Caco-2 (cell line): ENCODE measurements at regions of chr5 and their contacts with region 1.

Region 1: GRCh38 chr5:32174011-32174870 is at the start of gene GOLPH3:
- DNase-seq: peak; percentile 93 to 96
- H3K4me3 ChIP-seq: peak within 1 kb of the TSS; percentile 98
- H3K4me3 Mint-ChIP-seq: peak within 1 kb of the TSS; percentile 90
- H3K27ac Mint-ChIP-seq: peak within 1 kb of the TSS; percentile 98
- H3K4me1 ChIP-seq: 0 out of 2 replicates have a peak, but pooled peaks cover 4% of the 10 kb centered on the region
- H3K4me1 Mint-ChIP-seq: peaks cover 7% of the 10 kb centered on the region
- H3K27me3 ChIP-seq: no peaks in the 10 kb centered on the region
- H3K27me3 Mint-ChIP-seq: no peaks in the 10 kb centered on the region
- CTCF ChIP-seq: no peak
- total RNA-seq, gene GOLPH3: 107 and 122 TPM in 2 replicates

Region 2: DNA sequence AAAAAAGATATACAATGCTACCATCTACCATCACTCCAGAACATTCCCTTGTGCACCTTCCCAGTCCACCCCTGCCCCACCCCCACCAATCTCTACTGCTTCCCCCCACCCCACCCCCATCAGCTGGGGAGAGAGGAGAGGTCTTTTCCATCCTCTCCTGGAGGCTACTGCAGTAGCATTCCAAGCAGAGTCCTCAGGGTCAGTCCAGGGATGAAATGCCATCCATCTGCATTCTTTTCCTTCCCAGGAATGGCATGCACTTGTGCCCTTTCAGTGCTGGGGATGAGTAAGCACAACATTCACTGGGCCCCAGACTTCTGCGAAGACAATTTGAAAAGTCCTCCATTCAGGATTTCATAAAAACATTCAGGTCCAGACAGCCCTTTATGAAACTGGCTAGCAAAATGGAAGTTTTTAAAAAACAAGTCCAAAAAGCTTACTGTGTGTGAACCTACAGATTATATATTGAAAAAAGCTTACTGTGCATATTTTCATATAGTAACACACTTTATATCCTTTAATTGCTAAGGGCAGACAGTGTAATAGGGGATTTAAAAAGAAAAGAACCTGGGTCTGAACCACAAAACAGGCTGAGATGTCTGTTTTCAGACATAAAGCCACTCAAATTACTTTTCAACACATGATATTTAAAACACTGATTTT is 49.8 kb after region 1 on chr5:
- CTCF ChIA-PET with region 1: no interaction called
- POLR2A ChIA-PET with region 1: interaction called, 10 read pairs
- intact Hi-C with region 1: loop called (anchors 1 kb)
- DNase-seq: peak; percentile 82 to 90
- H3K4me3 ChIP-seq: no peak overlapping the region
- H3K4me3 Mint-ChIP-seq: peak overlapping the region; percentile 42
- H3K27ac Mint-ChIP-seq: peak overlapping the region; percentile 83
- H3K4me1 ChIP-seq: peaks cover 30% of the 10 kb centered on the region
- H3K4me1 Mint-ChIP-seq: peaks cover 22% of the 10 kb centered on the region
- H3K27me3 ChIP-seq: no peaks in the 10 kb centered on the region
- H3K27me3 Mint-ChIP-seq: no peaks in the 10 kb centered on the region
- CTCF ChIP-seq: no peak

Region 3: GRCh38 chr5:32329308-32329834 is 155.1 kb after region 1 on chr5:
- CTCF ChIA-PET with region 1: interaction called, 3 read pairs
- POLR2A ChIA-PET with region 1: no interaction called
- intact Hi-C with region 1: loop called (anchors 5 kb)
- DNase-seq: peak; percentile 61 to 68
- H3K4me3 ChIP-seq: no peak overlapping the region
- H3K4me3 Mint-ChIP-seq: no peak overlapping the region
- H3K27ac Mint-ChIP-seq: no peak overlapping the region
- H3K4me1 ChIP-seq: peaks cover 10% of the 10 kb centered on the region; the same call in 1 of the 2 replicates
- H3K4me1 Mint-ChIP-seq: peaks cover 16% of the 10 kb centered on the region
- H3K27me3 ChIP-seq: no peaks in the 10 kb centered on the region
- H3K27me3 Mint-ChIP-seq: no peaks in the 10 kb centered on the region
- CTCF ChIP-seq: peak; percentile 63 to 67